Naive thymus-derived CD4-positive, alpha-beta T cell (primary cell): ENCODE measurements at regions of chr9 and their contacts with region 1.

Region 1: GRCh38 chr9:19184144-19184917 is 46.2 kb upstream of the DENND4C start:
- DNase-seq: peak; percentile 32 to 75 (median 47)
- ATAC-seq: peak; percentile 97
- H3K4me3 ChIP-seq: no peak overlapping the region
- H3K4me3 Mint-ChIP-seq: peak overlapping the region in 9 of 10 donors; percentile 3 to 66 (median 34)
- H3K27ac ChIP-seq: peak overlapping the region; percentile 62
- H3K27ac Mint-ChIP-seq: peak overlapping the region; percentile 83 to 97 (median 93)
- H3K4me1 ChIP-seq: peaks cover 11 to 17% of the 10 kb centered on the region in 2 donors
- H3K4me1 Mint-ChIP-seq: peaks cover 6 to 19% (median 13%) of the 10 kb centered on the region in 7 donors
- H3K27me3 ChIP-seq: no peaks in the 10 kb centered on the region
- H3K27me3 Mint-ChIP-seq: no peaks in the 10 kb centered on the region

Region 2: GRCh38 chr9:18928711-18929110 is 255.6 kb before region 1 on chr9:
- CTCF ChIA-PET with region 1: no interaction called
- POLR2A ChIA-PET with region 1: no interaction called
- intact Hi-C with region 1: no loop called
- DNase-seq: no peak
- ATAC-seq: no peak
- H3K4me3 ChIP-seq: no peak overlapping the region
- H3K4me3 Mint-ChIP-seq: no peak overlapping the region
- H3K27ac ChIP-seq: no peak overlapping the region
- H3K27ac Mint-ChIP-seq: no peak overlapping the region
- H3K4me1 ChIP-seq: no peaks in the 10 kb centered on the region
- H3K4me1 Mint-ChIP-seq: no peaks in the 10 kb centered on the region
- H3K27me3 ChIP-seq: no peaks in the 10 kb centered on the region
- H3K27me3 Mint-ChIP-seq: no peaks in the 10 kb centered on the region

Region 3: GRCh38 chr9:19048966-19049916 is 135.1 kb before region 1 on chr9 and contains the start of gene RRAGA:
- CTCF ChIA-PET with region 1: interaction called, 4 read pairs
- POLR2A ChIA-PET with region 1: interaction called, 3 read pairs
- intact Hi-C with region 1: loop called in 1 of 2 experiments (anchors 1 kb)
- DNase-seq: peak; percentile 90 to 96 (median 95)
- ATAC-seq: peak; percentile 95
- H3K4me3 ChIP-seq: peak within 1 kb of the TSS; percentile 88
- H3K4me3 Mint-ChIP-seq: peak within 1 kb of the TSS; percentile 92 to 99 (median 95)
- H3K27ac ChIP-seq: peak within 1 kb of the TSS; percentile 85
- H3K27ac Mint-ChIP-seq: peak within 1 kb of the TSS; percentile 97 to 100 (median 98)
- H3K4me1 ChIP-seq: peaks cover 20% of the 10 kb centered on the region in 2 donors
- H3K4me1 Mint-ChIP-seq: peaks cover 6 to 50% (median 42%) of the 10 kb centered on the region in 7 donors
- H3K27me3 ChIP-seq: no peaks in the 10 kb centered on the region
- H3K27me3 Mint-ChIP-seq: peaks cover 0 to 2% (median 0%) of the 10 kb centered on the region in 5 donors
- total RNA-seq, gene RRAGA: 25.9 to 53.6 (median 51.9) TPM

Region 4: GRCh38 chr9:19161257-19162025 is 22.9 kb before region 1 on chr9:
- CTCF ChIA-PET with region 1: no interaction called
- POLR2A ChIA-PET with region 1: no interaction called
- intact Hi-C with region 1: loop called (anchors 1 kb)
- DNase-seq: peak in 8 of 9 donors; percentile 25 to 63 (median 37)
- ATAC-seq: peak; percentile 94
- H3K4me3 ChIP-seq: no peak overlapping the region
- H3K4me3 Mint-ChIP-seq: peak overlapping the region; percentile 26 to 77 (median 53)
- H3K27ac ChIP-seq: peak overlapping the region; percentile 12
- H3K27ac Mint-ChIP-seq: peak overlapping the region; percentile 72 to 96 (median 81)
- H3K4me1 ChIP-seq: peaks cover 6 to 12% of the 10 kb centered on the region in 2 donors
- H3K4me1 Mint-ChIP-seq: peaks cover 12 to 27% (median 19%) of the 10 kb centered on the region in 7 donors
- H3K27me3 ChIP-seq: no peaks in the 10 kb centered on the region
- H3K27me3 Mint-ChIP-seq: no peaks in the 10 kb centered on the region

Region 5: DNA sequence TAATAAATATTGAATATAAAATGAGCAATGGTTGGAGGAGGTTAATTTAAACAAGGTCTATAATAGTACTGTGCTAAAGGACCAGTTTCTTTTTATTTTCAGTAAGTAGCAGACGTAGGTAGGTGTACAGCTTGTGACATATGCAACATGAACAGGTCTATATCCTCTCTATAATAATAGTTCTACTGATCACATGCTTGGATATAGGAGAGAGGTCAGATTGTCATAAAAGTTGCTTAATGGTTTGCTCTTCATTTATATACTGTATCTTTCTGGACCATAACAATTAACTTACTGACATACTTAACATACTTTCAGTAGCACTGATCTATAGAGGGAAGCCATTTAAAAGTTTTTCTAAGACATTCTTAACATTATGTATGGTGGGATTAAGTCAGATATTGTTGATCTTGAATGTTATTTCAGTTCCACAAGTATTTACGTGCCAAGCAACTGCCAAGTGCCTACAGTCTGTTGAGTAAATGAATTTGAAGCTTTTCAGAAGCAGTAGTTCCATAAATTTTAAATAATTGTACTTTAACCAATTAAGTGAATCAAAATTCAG is 114.2 kb after region 1 on chr9:
- CTCF ChIA-PET with region 1: no interaction called
- POLR2A ChIA-PET with region 1: no interaction called
- intact Hi-C with region 1: loop called in 1 of 2 experiments (anchors 5 kb)
- DNase-seq: no peak
- ATAC-seq: no peak
- H3K4me3 ChIP-seq: no peak overlapping the region
- H3K4me3 Mint-ChIP-seq: no peak overlapping the region
- H3K27ac ChIP-seq: no peak overlapping the region
- H3K27ac Mint-ChIP-seq: peak overlapping the region in 1 of 9 donors; percentile 26
- H3K4me1 ChIP-seq: no peaks in the 10 kb centered on the region
- H3K4me1 Mint-ChIP-seq: peaks cover 0 to 8% (median 0%) of the 10 kb centered on the region in 7 donors
- H3K27me3 ChIP-seq: no peaks in the 10 kb centered on the region
- H3K27me3 Mint-ChIP-seq: no peaks in the 10 kb centered on the region